Activated CD8-positive, alpha-beta memory T cell treated with anti-CD3 and anti-CD28 coated beads, Interleukin-2, amount 10 ng/mL, durations not matched to agents 7 days and 5 days (primary cell): ENCODE measurements at regions of chr1 and their contacts with region 1.

Region 1: DNA sequence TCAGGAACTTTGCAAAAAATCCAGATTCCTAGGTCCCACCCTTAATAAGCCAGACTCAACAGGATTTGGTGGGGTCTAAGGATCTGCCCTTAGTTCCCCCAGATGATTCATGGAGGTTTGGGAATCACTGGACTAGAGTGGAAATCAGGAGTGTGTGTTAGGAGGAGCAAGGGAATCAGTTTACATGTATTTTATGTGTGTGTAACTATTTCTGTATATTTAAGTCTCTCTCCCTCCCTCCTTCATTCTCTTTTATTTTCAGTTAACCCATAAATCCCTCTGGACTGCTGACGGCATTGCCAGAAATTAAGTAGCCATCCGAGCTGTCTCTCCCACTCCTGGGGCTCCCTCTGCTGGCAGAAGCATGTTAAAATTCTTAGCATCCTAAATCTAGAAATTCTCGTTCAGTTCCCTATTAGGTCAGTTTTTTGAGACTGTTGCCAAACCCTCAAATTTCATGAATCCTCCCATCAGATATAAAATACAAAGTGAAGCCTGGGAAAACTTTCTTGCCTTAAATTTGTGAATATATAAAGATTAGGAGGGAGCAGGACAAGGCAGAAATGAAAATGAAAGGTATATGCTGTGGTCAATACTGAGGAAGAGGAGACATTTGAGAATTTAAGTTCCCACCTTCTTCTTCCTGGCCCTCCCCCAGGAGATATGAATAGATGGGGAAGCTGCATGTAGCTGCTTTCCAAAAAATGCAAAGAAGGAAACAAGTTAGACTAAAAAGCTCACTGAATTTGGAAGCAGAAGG is 11.7 kb upstream of the HSD11B1 start:
- DNase-seq: peak; percentile 83
- ATAC-seq: peak; percentile 86
- H3K4me3 Mint-ChIP-seq: peak overlapping the region; percentile 29
- H3K27ac Mint-ChIP-seq: peak overlapping the region; percentile 5
- H3K4me1 Mint-ChIP-seq: peaks cover 28% of the 10 kb centered on the region
- H3K27me3 Mint-ChIP-seq: no peaks in the 10 kb centered on the region

Region 2: DNA sequence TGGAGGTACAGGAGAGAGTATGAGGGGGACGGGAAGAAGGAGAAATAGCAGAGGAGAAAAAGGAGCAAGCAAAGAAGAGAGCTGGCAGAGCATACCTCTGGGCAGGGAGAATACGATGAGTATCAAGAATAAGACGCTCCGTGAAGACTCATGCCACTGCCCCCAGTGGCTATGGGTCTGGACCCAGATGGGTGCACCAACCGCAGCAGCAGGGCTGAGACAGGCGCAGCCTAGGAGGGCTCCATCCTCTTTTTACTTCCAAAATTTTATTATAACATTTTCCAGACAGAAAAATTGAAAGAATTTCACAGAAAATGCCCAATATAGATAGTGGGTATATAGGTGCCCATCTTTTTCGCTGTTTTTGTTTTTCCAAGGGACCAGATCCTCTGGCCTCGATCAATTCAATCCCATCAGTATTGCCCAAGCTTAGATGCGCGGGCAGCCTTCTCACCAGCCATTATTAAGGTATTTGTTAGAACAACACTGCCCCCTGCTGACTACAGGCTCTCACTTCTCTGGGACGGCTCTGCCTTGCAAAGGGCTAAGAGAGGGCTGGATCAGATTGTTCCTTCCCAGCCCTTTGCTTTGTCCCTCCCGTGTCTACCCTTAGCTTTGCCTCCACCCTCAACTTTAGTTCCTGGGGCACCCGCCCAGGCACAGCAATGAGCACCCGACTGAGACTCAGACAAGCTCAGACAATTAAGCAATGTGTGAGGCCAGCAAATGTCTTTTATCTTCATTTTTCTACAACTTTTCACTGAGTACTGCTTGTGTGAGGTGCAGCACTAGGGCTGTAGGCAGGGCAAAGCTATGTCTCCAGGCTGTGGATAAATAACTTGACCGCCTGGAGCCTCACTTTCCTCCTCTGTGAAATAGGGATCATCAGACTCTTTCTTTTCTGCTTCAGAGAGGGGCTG is 126.9 kb before region 1 on chr1:
- CTCF ChIA-PET with region 1: interaction called, 29 read pairs
- DNase-seq: peak; percentile 85
- ATAC-seq: peak; percentile 89
- H3K4me3 Mint-ChIP-seq: no peak overlapping the region
- H3K27ac Mint-ChIP-seq: no peak overlapping the region
- H3K4me1 Mint-ChIP-seq: peaks cover 9% of the 10 kb centered on the region
- H3K27me3 Mint-ChIP-seq: peaks cover 38% of the 10 kb centered on the region

Region 3: GRCh38 chr1:209576798-209577197 is 116.1 kb before region 1 on chr1:
- CTCF ChIA-PET with region 1: interaction called, 15 read pairs
- DNase-seq: peak; percentile 77
- ATAC-seq: peak; percentile 95
- H3K4me3 Mint-ChIP-seq: no peak overlapping the region
- H3K27ac Mint-ChIP-seq: no peak overlapping the region
- H3K4me1 Mint-ChIP-seq: no peaks in the 10 kb centered on the region
- H3K27me3 Mint-ChIP-seq: peaks cover 31% of the 10 kb centered on the region

Region 4: DNA sequence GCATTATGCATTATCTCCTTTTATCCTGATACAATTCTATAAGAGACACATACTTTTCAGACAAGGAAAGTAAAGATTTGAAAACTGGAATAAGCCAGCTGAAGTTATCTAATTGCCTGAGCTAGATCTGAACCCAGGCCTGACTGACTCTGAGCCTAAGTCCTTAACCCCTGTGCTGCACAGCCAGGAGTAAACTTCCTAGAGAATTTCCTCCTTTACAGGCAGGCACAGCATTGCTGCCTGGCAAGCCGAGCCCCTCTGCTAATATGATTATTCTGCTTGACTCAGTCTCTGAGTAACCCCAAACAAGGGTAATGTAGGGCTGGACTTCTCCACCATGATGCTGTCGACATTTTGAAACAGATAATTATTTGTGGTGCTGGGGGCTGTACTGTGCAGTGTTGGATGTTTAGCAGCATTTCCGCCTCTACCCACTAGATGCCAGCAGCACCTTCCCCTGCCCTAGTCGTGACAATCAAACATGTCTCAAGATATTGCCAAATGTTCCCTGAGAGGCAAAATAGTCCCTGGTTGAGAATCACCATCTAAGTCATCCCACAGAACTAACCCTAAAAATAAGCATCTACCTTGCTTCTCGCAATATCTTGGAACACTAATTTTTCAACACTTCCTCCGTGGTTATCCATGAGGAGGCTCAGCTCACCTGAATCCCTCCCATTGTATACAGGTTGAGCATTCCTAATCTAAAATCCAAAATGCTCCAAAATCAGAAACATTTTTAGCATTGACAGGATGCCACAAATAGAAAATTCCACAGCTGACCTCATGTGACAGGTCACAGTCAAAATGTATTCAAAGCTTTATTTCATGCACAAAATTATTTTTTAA is 90.9 kb before region 1 on chr1:
- CTCF ChIA-PET with region 1: interaction called, 15 read pairs
- DNase-seq: peak; percentile 55
- ATAC-seq: peak; percentile 73
- H3K4me3 Mint-ChIP-seq: no peak overlapping the region
- H3K27ac Mint-ChIP-seq: no peak overlapping the region
- H3K4me1 Mint-ChIP-seq: peaks cover 3% of the 10 kb centered on the region
- H3K27me3 Mint-ChIP-seq: peaks cover 43% of the 10 kb centered on the region

Region 5: GRCh38 chr1:209728466-209728865 is 35.5 kb after region 1 on chr1:
- CTCF ChIA-PET with region 1: interaction called, 11 read pairs
- DNase-seq: no peak
- ATAC-seq: no peak
- H3K4me3 Mint-ChIP-seq: no peak overlapping the region
- H3K27ac Mint-ChIP-seq: no peak overlapping the region
- H3K4me1 Mint-ChIP-seq: peaks cover 16% of the 10 kb centered on the region
- H3K27me3 Mint-ChIP-seq: no peaks in the 10 kb centered on the region